Sigmoid colon (tissue), 7 donors: ENCODE measurements at regions of chr6 and their contacts with region 1.

Region 1: DNA sequence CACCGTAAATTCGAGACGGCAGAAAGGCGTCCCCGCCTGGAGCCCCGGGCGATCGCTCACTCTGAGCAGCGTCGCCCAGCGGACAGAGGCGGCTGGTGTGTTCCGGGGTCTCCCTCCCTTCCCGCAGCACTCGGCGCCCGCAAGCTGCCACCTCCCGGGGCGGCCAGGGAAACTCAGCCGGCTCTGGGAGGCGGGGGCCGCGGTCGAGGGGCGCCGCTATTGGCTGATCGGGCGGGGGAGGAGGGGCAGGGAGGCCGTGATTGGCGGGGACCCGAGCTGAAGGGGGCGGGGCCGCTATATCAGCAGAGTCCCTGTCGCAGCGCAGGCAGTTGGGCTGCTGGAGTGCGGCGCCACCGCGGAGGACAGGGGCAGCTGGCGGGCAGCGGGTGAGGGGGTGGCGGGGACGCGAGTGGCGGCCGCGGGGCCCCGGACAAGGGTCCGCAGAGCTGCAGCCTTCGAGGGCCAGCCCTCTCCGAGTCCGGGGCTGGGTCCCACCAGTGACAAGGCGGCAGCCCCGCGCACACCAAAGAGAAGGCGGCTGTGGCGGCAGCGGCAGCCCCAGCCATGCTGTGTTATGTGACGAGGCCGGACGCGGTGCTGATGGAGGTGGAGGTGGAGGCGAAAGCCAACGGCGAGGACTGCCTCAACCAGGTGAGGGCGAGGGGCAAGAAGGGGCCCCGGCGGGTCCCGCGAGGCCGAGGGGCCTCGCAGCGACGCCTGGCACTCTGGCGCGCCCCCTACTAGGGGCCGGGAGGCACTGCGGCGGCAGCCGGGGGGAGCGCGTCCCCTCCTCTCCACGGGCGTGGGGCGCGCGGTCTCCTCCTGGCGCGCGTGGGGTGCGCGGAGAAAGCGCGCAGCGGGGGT is at the start of gene MYLIP:
- DNase-seq: peak; percentile 99
- H3K4me3 ChIP-seq: peak within 1 kb of the TSS; percentile 91 to 100 (median 98)
- H3K27ac ChIP-seq: peak within 1 kb of the TSS; percentile 94 to 100 (median 96)
- H3K4me1 ChIP-seq: peaks cover 0 to 35% (median 23%) of the 10 kb centered on the region in 4 donors
- H3K27me3 ChIP-seq: no peaks in the 10 kb centered on the region
- CTCF ChIP-seq: peak; percentile 63 to 88 (median 78)
- EP300 ChIP-seq: peak in 1 of 4 donors; percentile 24
- POLR2A ChIP-seq: peak; percentile 100
- total RNA-seq, gene MYLIP: 18.0 to 50.0 (median 41.3) TPM

Region 2: DNA sequence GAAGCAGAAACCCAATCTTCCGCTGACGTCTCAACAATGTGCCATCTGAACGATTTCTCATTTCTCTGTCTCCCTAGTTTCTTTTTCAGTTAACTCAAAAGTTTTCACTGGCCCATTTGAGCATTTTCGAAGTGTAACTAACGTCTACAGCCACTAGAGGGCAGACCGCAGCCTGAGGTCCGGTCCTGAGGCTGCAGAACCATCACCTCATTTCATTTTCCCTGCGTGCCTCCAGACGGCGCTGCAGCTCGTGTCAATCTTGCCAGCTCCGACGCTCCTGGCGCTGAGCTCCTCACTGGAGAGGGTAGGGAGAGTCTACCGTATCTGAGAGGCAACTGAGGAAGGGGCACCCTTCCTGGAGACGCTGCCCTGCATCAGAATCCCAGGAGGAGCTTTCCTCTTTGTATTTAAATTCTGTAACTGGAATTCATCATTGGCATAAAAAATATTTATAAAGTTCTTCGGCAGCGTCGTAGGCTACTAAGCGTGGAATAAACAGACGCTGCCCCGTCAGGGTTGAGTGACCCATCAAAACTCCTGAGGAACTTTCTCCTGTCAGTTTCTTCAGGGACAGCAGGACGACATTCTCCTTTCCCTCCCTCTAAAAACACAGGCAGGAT is 437.6 kb before region 1 on chr6:
- intact Hi-C with region 1: loop called (anchors 1 kb)
- DNase-seq: peak; percentile 94
- H3K4me3 ChIP-seq: peak overlapping the region; percentile 20 to 50 (median 41)
- H3K27ac ChIP-seq: peak overlapping the region in 2 of 4 donors; percentile 22 to 25
- H3K4me1 ChIP-seq: peaks cover 0 to 11% (median 4%) of the 10 kb centered on the region in 4 donors
- H3K27me3 ChIP-seq: no peaks in the 10 kb centered on the region
- CTCF ChIP-seq: peak; percentile 97 to 100 (median 99)
- EP300 ChIP-seq: no peak
- POLR2A ChIP-seq: no peak

Region 3: GRCh38 chr6:15922510-15923250 is 206.3 kb before region 1 on chr6:
- intact Hi-C with region 1: no loop called
- DNase-seq: no peak
- H3K4me3 ChIP-seq: no peak overlapping the region
- H3K27ac ChIP-seq: peak overlapping the region in 1 of 4 donors; percentile 31
- H3K4me1 ChIP-seq: peaks cover 0 to 15% (median 6%) of the 10 kb centered on the region in 4 donors
- H3K27me3 ChIP-seq: no peaks in the 10 kb centered on the region
- CTCF ChIP-seq: no peak
- EP300 ChIP-seq: no peak
- POLR2A ChIP-seq: no peak

Region 4: GRCh38 chr6:16058216-16059075 is 70.5 kb before region 1 on chr6:
- intact Hi-C with region 1: loop called (anchors 5 kb)
- DNase-seq: no peak
- H3K4me3 ChIP-seq: no peak overlapping the region
- H3K27ac ChIP-seq: no peak overlapping the region
- H3K4me1 ChIP-seq: peaks cover 0 to 19% (median 5%) of the 10 kb centered on the region in 4 donors
- H3K27me3 ChIP-seq: no peaks in the 10 kb centered on the region
- CTCF ChIP-seq: no peak
- EP300 ChIP-seq: no peak
- POLR2A ChIP-seq: no peak

Region 5: GRCh38 chr6:16105854-16106253 is 23.1 kb before region 1 on chr6:
- intact Hi-C with region 1: no loop called
- DNase-seq: no peak
- H3K4me3 ChIP-seq: no peak overlapping the region
- H3K27ac ChIP-seq: no peak overlapping the region
- H3K4me1 ChIP-seq: peaks cover 0 to 21% (median 14%) of the 10 kb centered on the region in 4 donors
- H3K27me3 ChIP-seq: no peaks in the 10 kb centered on the region
- CTCF ChIP-seq: no peak
- EP300 ChIP-seq: no peak
- POLR2A ChIP-seq: no peak

Region 6: GRCh38 chr6:16206595-16207037 is 77.6 kb after region 1 on chr6:
- intact Hi-C with region 1: loop called (anchors 5 kb)
- DNase-seq: no peak
- H3K4me3 ChIP-seq: no peak overlapping the region
- H3K27ac ChIP-seq: no peak overlapping the region
- H3K4me1 ChIP-seq: no peaks in the 10 kb centered on the region
- H3K27me3 ChIP-seq: no peaks in the 10 kb centered on the region
- CTCF ChIP-seq: peak; percentile 71 to 97 (median 94)
- EP300 ChIP-seq: no peak
- POLR2A ChIP-seq: no peak

Region 7: GRCh38 chr6:17392978-17393891 is 1264.2 kb after region 1 on chr6 and contains the start of gene CAP2:
- intact Hi-C with region 1: loop called (anchors 5 kb)
- DNase-seq: peak; percentile 93
- H3K4me3 ChIP-seq: peak within 1 kb of the TSS; percentile 78 to 96 (median 88)
- H3K27ac ChIP-seq: peak within 1 kb of the TSS; percentile 91 to 97 (median 94)
- H3K4me1 ChIP-seq: peaks cover 0 to 20% (median 13%) of the 10 kb centered on the region in 4 donors
- H3K27me3 ChIP-seq: no peaks in the 10 kb centered on the region
- CTCF ChIP-seq: no peak
- EP300 ChIP-seq: no peak
- POLR2A ChIP-seq: peak; percentile 35 to 44
- total RNA-seq, gene CAP2: 48.3 to 67.1 (median 55.6) TPM